ENCODE measurements at regions of chr17 and their contacts with region 1.

Region 1: DNA sequence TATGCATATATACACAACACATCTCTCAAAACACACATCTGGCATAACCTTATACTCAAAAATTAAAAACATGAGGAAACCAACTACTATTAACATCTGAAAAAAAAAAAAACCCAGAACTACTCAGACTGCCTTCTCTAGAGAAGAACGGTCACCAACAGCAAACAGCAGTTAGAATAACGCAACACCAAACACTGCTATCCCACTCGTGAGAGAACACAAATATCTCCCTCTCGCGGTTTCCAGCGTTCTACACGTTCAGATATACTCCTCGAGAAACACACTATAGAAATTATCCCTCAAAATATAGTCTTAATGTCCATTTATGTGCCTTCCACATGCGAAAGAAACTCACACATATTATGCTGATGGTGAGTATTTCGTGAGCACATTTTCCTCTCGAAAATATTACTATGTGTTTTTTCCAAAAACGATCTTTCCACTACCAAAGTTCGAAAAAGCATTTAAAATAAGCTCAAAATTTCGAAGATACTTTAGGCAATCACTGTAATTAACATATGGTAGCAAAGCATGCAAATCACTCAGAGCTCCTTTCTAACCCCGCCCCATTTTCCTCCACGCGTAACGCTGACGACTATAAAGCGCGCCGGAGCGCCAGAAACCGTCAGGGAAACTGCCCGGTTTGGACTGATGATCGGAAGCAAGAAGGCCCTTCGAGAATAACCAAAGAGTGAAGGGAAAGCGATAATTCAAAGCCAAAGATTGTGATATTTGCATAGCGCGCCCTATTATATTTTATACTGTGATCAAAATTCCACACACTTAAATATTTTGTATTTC is 60.1 kb downstream of the TEX14 start:
- DNase-seq: peak; percentile 98
- H3K4me3 Mint-ChIP-seq: no peak overlapping the region
- H3K27ac Mint-ChIP-seq: no peak overlapping the region
- H3K4me1 Mint-ChIP-seq: peaks cover 3% of the 10 kb centered on the region
- H3K27me3 Mint-ChIP-seq: no peaks in the 10 kb centered on the region

Region 2: DNA sequence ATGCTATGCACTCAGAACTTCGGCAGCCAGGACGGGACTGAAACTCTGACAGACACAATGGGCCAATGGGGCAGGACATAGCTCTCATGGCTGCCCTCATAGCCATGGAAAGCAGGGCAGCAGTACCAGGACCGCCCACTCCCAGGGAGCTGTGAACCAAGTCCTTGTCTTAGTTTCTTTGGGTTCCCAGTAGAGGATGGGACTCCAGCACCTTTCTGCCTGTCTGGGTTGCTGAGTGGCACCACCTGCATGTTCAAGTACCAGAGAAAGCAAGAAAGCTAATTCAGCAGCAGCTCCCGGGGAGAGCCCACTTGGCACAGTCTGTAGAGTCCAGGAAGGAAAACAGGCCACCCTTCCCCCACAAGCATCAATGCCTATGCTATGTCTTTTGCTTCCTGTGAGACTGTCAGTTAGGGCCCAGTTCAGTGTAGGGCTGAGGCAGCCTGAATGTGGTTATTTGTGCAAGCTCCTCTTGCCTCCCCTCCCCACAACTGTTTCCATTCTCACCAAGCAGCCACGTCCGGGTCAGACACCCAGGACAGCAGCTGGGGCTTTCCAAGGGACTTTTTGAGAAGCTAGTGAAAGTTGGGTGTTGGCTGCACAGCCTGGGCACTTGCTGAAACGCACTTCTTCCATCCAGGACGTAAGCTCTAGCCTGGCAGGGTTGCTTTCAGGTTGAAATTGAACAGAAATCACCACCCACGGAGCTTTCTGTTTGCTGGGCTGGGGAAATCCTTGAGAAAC is 287.5 kb before region 1 on chr17:
- CTCF ChIA-PET with region 1: no interaction called
- POLR2A ChIA-PET with region 1: interaction called, 21 read pairs
- intact Hi-C with region 1: loop called (anchors 5 kb)
- DNase-seq: peak; percentile 97
- H3K4me3 Mint-ChIP-seq: peak overlapping the region; percentile 92
- H3K27ac Mint-ChIP-seq: peak overlapping the region; percentile 98
- H3K4me1 Mint-ChIP-seq: peaks cover 56% of the 10 kb centered on the region
- H3K27me3 Mint-ChIP-seq: no peaks in the 10 kb centered on the region

Region 3: DNA sequence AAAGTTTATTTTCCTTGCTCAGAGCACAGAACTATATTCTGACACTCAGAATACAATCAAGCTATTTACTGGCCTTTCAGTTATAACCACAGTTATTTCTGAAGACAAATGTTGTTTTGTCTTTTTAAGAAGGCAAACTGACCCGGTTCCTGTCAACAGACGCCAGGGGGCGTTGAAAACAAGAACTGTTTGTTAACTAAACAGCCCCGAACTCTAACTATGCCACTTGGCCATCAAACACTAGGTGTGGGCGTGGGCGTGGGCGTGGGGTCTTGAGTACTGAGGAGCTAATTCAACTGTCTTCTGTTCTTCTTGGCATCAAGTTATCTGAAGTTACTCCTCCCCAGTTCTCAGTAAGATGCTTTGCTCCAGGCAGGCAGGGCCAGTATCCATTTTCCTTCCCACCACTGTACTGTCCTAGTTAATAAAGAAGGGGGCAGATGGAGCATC is 54.1 kb before region 1 on chr17:
- CTCF ChIA-PET with region 1: interaction called, 4 read pairs
- POLR2A ChIA-PET with region 1: interaction called, 18 read pairs
- intact Hi-C with region 1: loop called (anchors 10 kb)
- DNase-seq: peak; percentile 55
- H3K4me3 Mint-ChIP-seq: no peak overlapping the region
- H3K27ac Mint-ChIP-seq: no peak overlapping the region
- H3K4me1 Mint-ChIP-seq: no peaks in the 10 kb centered on the region
- H3K27me3 Mint-ChIP-seq: no peaks in the 10 kb centered on the region

Region 4: GRCh38 chr17:58615768-58616659 is 15.7 kb before region 1 on chr17:
- CTCF ChIA-PET with region 1: no interaction called
- POLR2A ChIA-PET with region 1: interaction called, 52 read pairs
- intact Hi-C with region 1: no loop called
- DNase-seq: no peak
- H3K4me3 Mint-ChIP-seq: no peak overlapping the region
- H3K27ac Mint-ChIP-seq: peak overlapping the region; percentile 21
- H3K4me1 Mint-ChIP-seq: peaks cover 13% of the 10 kb centered on the region
- H3K27me3 Mint-ChIP-seq: no peaks in the 10 kb centered on the region

Region 5: GRCh38 chr17:58658804-58659713 is 27.3 kb after region 1 on chr17:
- CTCF ChIA-PET with region 1: interaction called, 13 read pairs
- POLR2A ChIA-PET with region 1: interaction called, 243 read pairs
- intact Hi-C with region 1: loop called (anchors 1 kb)
- DNase-seq: peak; percentile 86
- H3K4me3 Mint-ChIP-seq: peak overlapping the region; percentile 77
- H3K27ac Mint-ChIP-seq: peak overlapping the region; percentile 97
- H3K4me1 Mint-ChIP-seq: peaks cover 18% of the 10 kb centered on the region
- H3K27me3 Mint-ChIP-seq: peaks cover 5% of the 10 kb centered on the region

Region 6: DNA sequence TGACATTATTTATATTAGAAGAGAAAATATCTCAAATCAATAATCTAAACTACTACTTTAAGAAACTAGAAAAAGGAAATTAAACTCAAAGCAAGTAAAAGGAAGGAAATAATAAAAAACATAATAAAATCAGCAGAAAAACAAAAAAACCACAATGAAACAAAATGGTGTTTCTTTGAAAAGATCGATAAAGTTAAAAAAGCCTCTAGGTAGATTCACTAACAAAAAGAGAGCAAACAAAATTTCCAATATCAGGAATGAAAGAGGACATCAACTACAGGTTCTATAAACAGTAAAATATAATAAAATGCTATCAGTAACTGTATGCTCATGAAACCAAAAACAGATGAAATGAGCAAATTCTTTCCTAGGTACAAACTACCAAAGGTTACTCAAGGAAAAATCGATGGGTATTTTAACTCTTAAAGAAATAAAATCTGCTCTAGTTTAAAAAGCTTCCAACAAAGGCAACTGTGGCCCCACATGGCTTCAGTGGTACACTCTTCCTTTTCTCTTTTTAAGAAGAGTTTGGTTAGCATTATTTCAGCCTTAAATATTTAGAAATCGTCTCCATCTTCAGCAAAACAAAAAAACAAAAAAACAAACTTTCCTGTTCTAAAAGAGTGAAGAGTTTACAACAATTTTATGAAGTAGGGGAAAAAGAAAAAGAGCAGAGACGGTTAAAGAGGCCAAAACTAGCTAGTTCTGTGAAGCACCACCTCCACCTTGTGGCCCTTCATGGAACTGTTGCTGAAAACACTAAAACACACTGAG is 372.8 kb after region 1 on chr17:
- CTCF ChIA-PET with region 1: no interaction called
- POLR2A ChIA-PET with region 1: interaction called, 5 read pairs
- intact Hi-C with region 1: loop called (anchors 1 kb)
- DNase-seq: peak; percentile 76
- H3K4me3 Mint-ChIP-seq: no peak overlapping the region
- H3K27ac Mint-ChIP-seq: peak overlapping the region; percentile 13
- H3K4me1 Mint-ChIP-seq: peaks cover 23% of the 10 kb centered on the region
- H3K27me3 Mint-ChIP-seq: no peaks in the 10 kb centered on the region